ENCODE measurements at regions of chr13 and their contacts with region 1.

Region 1: DNA sequence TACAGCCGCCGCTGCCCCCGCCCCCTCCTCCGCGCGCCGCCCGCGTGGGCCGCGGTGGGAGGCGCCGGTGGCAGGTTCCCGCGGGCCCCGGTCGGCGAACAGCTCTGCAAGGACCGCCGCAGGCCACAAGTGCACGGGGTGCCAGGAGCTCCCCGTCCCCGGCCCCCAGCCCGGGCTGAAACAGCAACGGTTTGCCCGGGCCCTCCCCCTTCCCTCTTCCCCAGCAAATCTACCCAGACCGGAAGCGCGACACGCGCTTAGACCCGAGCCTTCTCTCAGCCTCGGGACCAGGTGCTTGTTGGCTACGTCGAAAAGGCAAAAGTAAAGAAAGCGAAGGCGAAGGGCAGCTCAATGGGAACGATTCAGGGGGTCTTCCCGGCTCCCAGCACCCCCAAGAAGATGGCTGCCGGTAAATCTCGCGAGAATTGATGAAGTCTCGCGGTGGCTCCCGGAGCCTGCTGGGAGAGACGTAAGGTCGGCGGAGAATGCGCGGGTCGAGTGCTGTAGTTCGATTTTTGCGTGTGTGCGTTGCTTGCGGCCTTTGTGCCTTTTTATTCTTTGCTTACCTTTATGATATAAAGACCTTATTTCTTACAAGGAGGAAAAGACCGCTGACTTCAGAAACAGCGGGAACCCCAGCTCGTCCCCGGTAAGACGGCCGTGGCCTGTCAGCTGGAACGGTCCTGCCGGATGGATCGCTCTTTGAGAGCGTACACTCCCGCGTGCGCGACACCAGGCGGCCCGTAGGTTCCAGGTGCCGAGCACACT is at the start of gene RBM26:
- DNase-seq: peak; percentile 95
- H3K4me3 Mint-ChIP-seq: no peak within 1 kb of the TSS
- H3K27ac Mint-ChIP-seq: peak within 1 kb of the TSS; percentile 91
- H3K4me1 Mint-ChIP-seq: peaks cover 24% of the 10 kb centered on the region
- H3K27me3 Mint-ChIP-seq: no peaks in the 10 kb centered on the region
- CTCF ChIP-seq: no peak
- total RNA-seq, gene RBM26: 60.5 and 72.6 TPM in 2 replicates

Region 2: DNA sequence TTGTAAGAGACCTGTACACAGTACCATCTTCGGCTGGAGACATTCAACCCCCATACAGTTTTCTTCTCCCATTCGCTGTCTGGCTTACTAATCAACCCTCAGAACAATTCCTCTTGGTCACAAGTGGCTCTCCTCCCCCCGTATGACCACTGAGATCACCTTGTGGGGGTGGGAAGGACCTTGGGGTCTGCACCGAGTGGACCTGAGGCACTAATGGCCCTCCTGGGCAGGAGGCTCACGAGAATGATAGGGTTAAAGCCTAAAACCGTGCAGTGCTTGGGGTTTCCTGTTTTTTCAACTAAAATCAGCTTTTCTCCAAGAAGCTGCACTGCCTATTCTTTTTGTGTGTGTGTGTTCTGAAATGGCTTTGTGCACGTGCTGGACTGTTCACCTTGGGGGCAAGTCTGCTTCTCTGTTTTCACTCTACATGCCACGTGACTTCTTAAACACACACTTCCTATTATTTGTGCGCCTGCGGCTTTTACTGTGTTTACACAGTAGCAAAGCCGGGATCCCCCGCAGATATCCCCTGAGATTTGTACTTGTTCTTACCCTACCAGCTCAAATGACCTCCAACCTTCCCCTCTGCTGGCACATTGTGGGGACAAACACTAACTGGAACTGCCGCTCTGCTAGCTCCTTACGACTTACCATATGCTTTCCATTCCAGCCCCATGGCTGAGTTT is 12.3 kb before region 1 on chr13:
- CTCF ChIA-PET with region 1: interaction called, 6 read pairs
- POLR2A ChIA-PET with region 1: interaction called, 17 read pairs
- intact Hi-C with region 1: no loop called
- DNase-seq: no peak
- H3K4me3 Mint-ChIP-seq: no peak overlapping the region
- H3K27ac Mint-ChIP-seq: peak overlapping the region; percentile 5
- H3K4me1 Mint-ChIP-seq: peaks cover 24% of the 10 kb centered on the region
- H3K27me3 Mint-ChIP-seq: no peaks in the 10 kb centered on the region
- CTCF ChIP-seq: no peak

Region 3: GRCh38 chr13:79423801-79424642 is 18.0 kb after region 1 on chr13:
- CTCF ChIA-PET with region 1: interaction called, 19 read pairs
- POLR2A ChIA-PET with region 1: interaction called, 13 read pairs
- intact Hi-C with region 1: no loop called
- DNase-seq: peak; percentile 61
- H3K4me3 Mint-ChIP-seq: no peak overlapping the region
- H3K27ac Mint-ChIP-seq: no peak overlapping the region
- H3K4me1 Mint-ChIP-seq: no peaks in the 10 kb centered on the region
- H3K27me3 Mint-ChIP-seq: no peaks in the 10 kb centered on the region
- CTCF ChIP-seq: peak; percentile 48

Region 4: GRCh38 chr13:79445968-79446645 is 40.1 kb after region 1 on chr13:
- CTCF ChIA-PET with region 1: no interaction called
- POLR2A ChIA-PET with region 1: no interaction called
- intact Hi-C with region 1: no loop called
- DNase-seq: no peak
- H3K4me3 Mint-ChIP-seq: no peak overlapping the region
- H3K27ac Mint-ChIP-seq: no peak overlapping the region
- H3K4me1 Mint-ChIP-seq: no peaks in the 10 kb centered on the region
- H3K27me3 Mint-ChIP-seq: no peaks in the 10 kb centered on the region
- CTCF ChIP-seq: no peak

Region 5: DNA sequence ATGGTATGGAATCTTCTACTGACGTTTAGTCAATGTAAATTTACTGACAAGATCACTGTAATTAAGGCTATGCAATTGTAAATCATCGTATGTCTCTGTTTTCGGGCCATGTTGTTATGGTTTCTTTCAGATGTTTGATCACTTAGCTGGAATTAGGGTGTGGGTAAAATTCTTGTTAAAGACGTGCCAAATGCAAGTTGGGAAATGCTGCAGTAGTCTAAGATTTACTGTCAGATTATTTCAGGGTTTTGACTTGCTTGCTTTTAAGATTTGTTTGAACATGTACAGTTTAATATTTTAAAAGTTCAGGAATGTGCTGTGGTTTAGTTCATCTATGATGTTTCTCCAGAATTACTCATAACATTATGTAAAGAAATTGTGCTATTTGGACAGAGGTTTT is 85.7 kb after region 1 on chr13:
- CTCF ChIA-PET with region 1: interaction called, 3 read pairs
- POLR2A ChIA-PET with region 1: interaction called, 11 read pairs
- intact Hi-C with region 1: no loop called
- DNase-seq: peak; percentile 81
- H3K4me3 Mint-ChIP-seq: peak overlapping the region; percentile 53
- H3K27ac Mint-ChIP-seq: peak overlapping the region; percentile 100
- H3K4me1 Mint-ChIP-seq: peaks cover 75% of the 10 kb centered on the region
- H3K27me3 Mint-ChIP-seq: no peaks in the 10 kb centered on the region
- CTCF ChIP-seq: no peak

Region 6: GRCh38 chr13:79525064-79525857 is 119.2 kb after region 1 on chr13:
- CTCF ChIA-PET with region 1: interaction called, 4 read pairs
- POLR2A ChIA-PET with region 1: interaction called, 12 read pairs
- intact Hi-C with region 1: no loop called
- DNase-seq: peak; percentile 72
- H3K4me3 Mint-ChIP-seq: no peak overlapping the region
- H3K27ac Mint-ChIP-seq: no peak overlapping the region
- H3K4me1 Mint-ChIP-seq: peaks cover 13% of the 10 kb centered on the region
- H3K27me3 Mint-ChIP-seq: no peaks in the 10 kb centered on the region
- CTCF ChIP-seq: no peak